ENCODE measurements at regions of chr20 and their contacts with region 1.

Region 1: GRCh38 chr20:32674362-32674789 is 635 bp upstream of the C20orf203 start:
- DNase-seq: peak; percentile 50
- ATAC-seq: peak; percentile 88
- H3K4me3 ChIP-seq: no peak overlapping the region
- H3K27ac ChIP-seq: no peak overlapping the region
- H3K4me1 ChIP-seq: no peaks in the 10 kb centered on the region
- H3K27me3 ChIP-seq: no peaks in the 10 kb centered on the region
- CTCF ChIP-seq: peak; percentile 95

Region 2: GRCh38 chr20:32697608-32698007 is 23.2 kb after region 1 on chr20:
- CTCF ChIA-PET with region 1: no interaction called
- POLR2A ChIA-PET with region 1: interaction called, 13 read pairs
- in situ Hi-C with region 1: no loop called
- intact Hi-C with region 1: no loop called
- DNase-seq: no peak
- ATAC-seq: peak; percentile 48
- H3K4me3 ChIP-seq: no peak overlapping the region
- H3K27ac ChIP-seq: no peak overlapping the region
- H3K4me1 ChIP-seq: no peaks in the 10 kb centered on the region
- H3K27me3 ChIP-seq: no peaks in the 10 kb centered on the region
- CTCF ChIP-seq: no peak

Region 3: DNA sequence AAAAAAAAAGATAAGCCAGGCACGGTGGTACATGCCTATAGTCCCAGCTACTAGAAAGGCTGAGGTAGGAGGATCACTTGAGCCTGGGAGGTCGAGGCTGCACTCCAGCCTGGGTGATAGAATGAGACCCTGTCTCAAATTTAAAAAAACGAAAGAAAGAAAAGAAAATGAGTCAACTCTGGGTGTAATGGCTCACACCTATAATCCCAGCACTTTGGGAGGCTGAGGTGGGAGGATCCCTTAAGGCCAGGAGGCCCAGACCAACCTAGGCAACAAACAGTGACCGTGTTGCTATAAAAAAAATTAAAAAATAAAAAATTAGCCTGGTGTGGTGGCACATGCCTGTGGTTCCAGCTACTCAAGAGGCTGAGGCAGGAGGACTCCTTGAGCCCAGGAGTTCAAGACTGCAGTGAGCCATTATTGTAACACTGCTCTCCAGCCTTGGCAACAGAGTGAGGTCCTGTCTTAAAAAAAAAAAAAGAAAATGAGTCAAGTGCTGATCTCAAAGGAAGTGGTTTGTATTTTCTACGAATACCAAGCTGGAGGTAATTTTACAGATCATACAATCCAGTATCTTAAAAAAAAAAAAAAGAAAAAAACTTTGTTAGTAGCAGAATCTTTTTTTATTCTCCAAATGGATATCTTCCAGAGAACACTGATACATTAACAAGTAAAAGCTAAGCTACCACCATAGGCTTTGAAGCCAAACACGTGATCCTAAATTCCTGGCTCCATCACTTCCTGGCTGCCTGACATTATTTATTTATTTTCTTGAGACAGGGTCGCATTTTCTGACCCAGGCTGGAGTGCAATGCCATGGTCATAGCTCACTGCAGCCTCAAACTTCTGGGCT is 63.2 kb after region 1 on chr20:
- CTCF ChIA-PET with region 1: no interaction called
- POLR2A ChIA-PET with region 1: no interaction called
- in situ Hi-C with region 1: no loop called
- intact Hi-C with region 1: no loop called
- DNase-seq: no peak
- ATAC-seq: no peak
- H3K4me3 ChIP-seq: no peak overlapping the region
- H3K27ac ChIP-seq: no peak overlapping the region
- H3K4me1 ChIP-seq: peaks cover 1% of the 10 kb centered on the region; the same call in 1 of the 2 replicates
- H3K27me3 ChIP-seq: no peaks in the 10 kb centered on the region
- CTCF ChIP-seq: no peak